ENCODE measurements at regions of chr3 and their contacts with region 1.

Region 1: DNA sequence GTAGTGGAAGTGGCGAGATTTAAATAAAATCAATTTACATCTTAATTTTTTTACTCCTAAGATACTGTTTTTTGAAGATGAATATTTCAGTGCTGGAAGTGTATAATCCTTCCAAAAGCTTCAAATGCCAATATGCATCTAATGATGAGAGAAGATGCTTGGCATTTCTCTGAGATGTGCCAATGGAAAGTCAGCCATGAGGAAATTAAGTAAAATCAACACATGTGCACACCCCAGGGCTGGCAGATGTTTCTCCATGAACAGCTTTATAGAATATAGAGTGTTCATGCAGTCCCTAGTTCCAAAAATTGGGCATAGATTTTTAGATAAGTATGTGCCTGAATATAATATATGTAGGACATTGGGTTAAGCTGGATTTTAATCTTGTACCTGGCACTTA is 90.1 kb downstream of the CPNE4 start:
- DNase-seq: no peak
- ATAC-seq: no peak
- H3K4me3 ChIP-seq: no peak overlapping the region
- H3K4me3 Mint-ChIP-seq: no peak overlapping the region
- H3K27ac ChIP-seq: no peak overlapping the region
- H3K27ac Mint-ChIP-seq: peak overlapping the region in 2 of 9 donors; percentile 5 to 40
- H3K4me1 ChIP-seq: peaks cover 0 to 14% of the 10 kb centered on the region in 2 donors
- H3K4me1 Mint-ChIP-seq: peaks cover 6 to 50% (median 37%) of the 10 kb centered on the region in 7 donors
- H3K27me3 ChIP-seq: no peaks in the 10 kb centered on the region
- H3K27me3 Mint-ChIP-seq: no peaks in the 10 kb centered on the region

Region 2: GRCh38 chr3:131895766-131896165 is 48.9 kb before region 1 on chr3:
- CTCF ChIA-PET with region 1: no interaction called
- POLR2A ChIA-PET with region 1: no interaction called
- intact Hi-C with region 1: loop called in 1 of 2 experiments (anchors 1 kb)
- DNase-seq: no peak
- ATAC-seq: no peak
- H3K4me3 ChIP-seq: no peak overlapping the region
- H3K4me3 Mint-ChIP-seq: no peak overlapping the region
- H3K27ac ChIP-seq: no peak overlapping the region
- H3K27ac Mint-ChIP-seq: no peak overlapping the region
- H3K4me1 ChIP-seq: no peaks in the 10 kb centered on the region
- H3K4me1 Mint-ChIP-seq: no peaks in the 10 kb centered on the region
- H3K27me3 ChIP-seq: no peaks in the 10 kb centered on the region
- H3K27me3 Mint-ChIP-seq: peaks cover 0 to 15% (median 1%) of the 10 kb centered on the region in 5 donors

Measured in naive thymus-derived CD4-positive, alpha-beta T cell (primary cell).